Sciatic nerve (tissue), 2 donors: ENCODE measurements at regions of chr9 and their contacts with region 1.

Region 1: DNA sequence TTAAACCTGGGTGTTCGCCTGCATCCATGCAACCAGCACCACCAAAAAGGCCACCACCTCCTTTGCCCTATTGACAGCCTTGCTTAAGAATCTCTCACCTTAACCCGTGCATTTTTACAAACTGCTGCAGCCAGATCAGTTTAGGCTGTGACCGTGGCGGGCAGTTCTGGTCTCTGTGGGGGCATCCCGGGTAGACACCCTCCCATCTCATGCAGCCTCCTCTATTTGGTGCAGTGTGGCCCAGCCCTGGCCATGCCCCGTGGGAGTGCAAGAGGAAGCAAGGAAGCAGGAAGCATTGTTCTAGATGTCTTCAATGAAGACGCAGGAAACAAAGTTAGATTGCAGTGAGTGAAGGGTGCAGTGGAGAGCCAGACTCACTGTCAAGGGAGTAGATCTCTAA is 108.8 kb upstream of the MVB12B start:
- DNase-seq: no peak
- ATAC-seq: no peak

Region 2: GRCh38 chr9:125415583-125416460 is 802.0 kb before region 1 on chr9:
- intact Hi-C with region 1: loop called (anchors 2 kb)
- DNase-seq: no peak
- ATAC-seq: no peak

Region 3: GRCh38 chr9:126144603-126145456 is 73.0 kb before region 1 on chr9:
- intact Hi-C with region 1: no loop called
- DNase-seq: no peak
- ATAC-seq: no peak

Region 4: GRCh38 chr9:126173401-126173800 is 44.4 kb before region 1 on chr9:
- intact Hi-C with region 1: no loop called
- DNase-seq: no peak
- ATAC-seq: no peak

Region 5: DNA sequence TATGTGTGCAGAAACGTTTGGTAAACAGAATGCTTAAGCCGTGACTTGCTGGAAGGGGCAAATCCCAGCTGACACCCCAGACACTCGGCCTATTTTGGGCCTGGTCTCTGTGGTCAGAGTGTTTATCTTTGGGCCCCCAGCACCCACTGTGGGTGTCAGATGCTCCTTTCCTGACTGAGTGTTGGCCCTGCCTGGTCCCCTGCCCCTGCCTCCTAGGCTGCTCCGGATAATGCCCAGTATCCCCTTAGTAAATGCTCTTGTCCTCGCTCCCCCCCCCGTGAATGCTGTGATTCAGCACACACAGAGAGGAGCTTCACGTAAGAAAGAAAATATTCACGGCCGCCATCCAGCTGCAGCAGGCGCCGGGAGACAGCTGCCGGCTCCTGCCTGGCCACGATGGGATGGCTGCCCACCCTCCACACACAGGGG is 916.0 kb after region 1 on chr9:
- intact Hi-C with region 1: no loop called
- DNase-seq: peak; percentile 65
- ATAC-seq: peak; percentile 71